Common myeloid progenitor, CD34-positive (primary cell): ENCODE measurements at regions of chr5 and their contacts with region 1.

Region 1: GRCh38 chr5:157948738-157949410 is 89.9 kb upstream of the CLINT1 start:
- DNase-seq: peak; percentile 89 to 95 (median 93)
- H3K4me3 ChIP-seq: peak overlapping the region in 1 of 7 experiments; percentile 23
- H3K27ac ChIP-seq: no peak overlapping the region
- H3K4me1 ChIP-seq: peaks cover 0 to 3% (median 0%) of the 10 kb centered on the region in 4 experiments
- H3K27me3 ChIP-seq: no peaks in the 10 kb centered on the region

Region 2: DNA sequence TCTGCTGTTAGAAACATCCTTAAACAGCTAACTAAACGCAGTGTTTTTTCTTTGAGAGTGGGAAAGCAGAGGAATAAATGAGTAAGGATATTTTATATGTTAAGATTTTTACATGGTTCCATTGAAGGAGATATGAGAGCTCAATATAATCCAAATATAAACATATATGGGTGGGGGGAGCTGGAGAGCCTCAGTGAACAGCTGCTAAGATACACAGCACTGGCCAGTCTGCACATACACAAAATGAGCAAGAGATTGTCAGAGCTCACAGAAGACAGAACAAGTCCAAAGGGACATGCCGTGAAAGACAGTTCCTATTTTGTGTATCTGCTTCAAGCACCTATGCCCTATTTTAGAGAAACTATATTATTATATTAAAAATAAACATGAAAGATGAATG is 136.8 kb before region 1 on chr5:
- CTCF ChIA-PET with region 1: interaction called, 52 read pairs
- POLR2A ChIA-PET with region 1: interaction called, 5 read pairs
- DNase-seq: no peak
- H3K4me3 ChIP-seq: no peak overlapping the region
- H3K27ac ChIP-seq: no peak overlapping the region
- H3K4me1 ChIP-seq: no peaks in the 10 kb centered on the region
- H3K27me3 ChIP-seq: no peaks in the 10 kb centered on the region

Region 3: DNA sequence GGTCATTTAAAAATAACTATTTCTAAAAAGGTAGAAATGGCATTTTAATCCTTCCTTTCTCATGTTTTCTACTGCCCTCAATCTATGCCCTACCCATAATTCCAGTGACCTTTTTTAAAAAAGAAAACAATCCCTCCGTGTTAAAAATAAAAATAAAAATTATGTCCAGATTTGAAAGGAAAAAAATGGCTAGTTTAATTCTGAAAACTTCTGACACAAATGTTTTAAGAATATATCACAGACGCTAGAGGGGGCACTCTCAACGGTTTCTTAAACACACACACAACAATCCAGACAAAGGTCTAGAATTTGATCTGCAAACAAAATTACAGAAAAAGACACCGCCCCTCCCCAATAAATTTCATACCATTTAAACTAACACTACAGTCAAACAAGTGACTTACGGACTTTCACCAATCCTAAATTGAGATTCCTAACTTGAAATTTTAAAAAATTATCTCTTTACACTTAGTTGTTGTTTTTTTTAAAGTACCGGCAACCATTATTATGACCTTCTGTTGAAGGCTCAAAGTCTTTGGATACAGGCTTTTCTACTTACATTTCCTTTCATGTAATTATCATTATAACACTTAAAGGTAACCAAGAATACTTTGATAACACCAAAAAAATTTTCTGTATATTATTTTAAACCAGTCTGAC is 128.2 kb before region 1 on chr5:
- CTCF ChIA-PET with region 1: interaction called, 52 read pairs
- POLR2A ChIA-PET with region 1: interaction called, 5 read pairs
- DNase-seq: peak; percentile 72 to 87 (median 87)
- H3K4me3 ChIP-seq: no peak overlapping the region
- H3K27ac ChIP-seq: no peak overlapping the region
- H3K4me1 ChIP-seq: peaks cover 0 to 25% (median 3%) of the 10 kb centered on the region in 4 experiments
- H3K27me3 ChIP-seq: no peaks in the 10 kb centered on the region

Region 4: DNA sequence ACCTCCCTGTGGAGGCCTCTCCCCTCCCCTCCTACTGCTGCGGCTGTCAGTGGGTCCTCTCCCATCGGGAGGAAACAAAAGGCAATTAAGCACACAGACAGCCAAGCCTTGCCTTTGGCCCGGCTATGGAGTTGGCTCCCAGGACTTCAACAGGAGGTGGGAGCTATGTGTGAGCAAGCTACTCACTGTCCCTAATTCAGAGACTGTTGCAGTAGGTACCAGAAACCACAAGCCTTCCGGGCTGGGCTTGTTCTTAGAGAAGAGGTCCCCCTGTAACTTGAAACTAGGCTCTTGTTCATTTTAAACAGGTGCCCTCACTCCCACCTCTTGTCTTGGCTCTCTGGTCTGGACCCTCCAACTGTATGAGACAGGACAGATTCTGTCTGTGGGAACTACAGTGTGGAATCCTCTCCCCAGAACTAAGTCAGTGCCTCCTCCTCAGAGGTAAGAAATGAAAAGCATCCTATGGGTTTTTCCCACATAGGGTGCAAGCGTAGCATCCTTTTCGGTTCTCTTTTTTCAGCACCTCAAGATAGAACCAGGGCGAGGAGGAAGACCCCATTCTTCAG is 589.7 kb after region 1 on chr5:
- CTCF ChIA-PET with region 1: no interaction called
- POLR2A ChIA-PET with region 1: no interaction called
- DNase-seq: peak; percentile 2 to 19 (median 15)
- H3K4me3 ChIP-seq: no peak overlapping the region
- H3K27ac ChIP-seq: no peak overlapping the region
- H3K4me1 ChIP-seq: peaks cover 0 to 6% (median 5%) of the 10 kb centered on the region in 4 experiments
- H3K27me3 ChIP-seq: peaks cover 0 to 10% (median 2%) of the 10 kb centered on the region in 5 experiments